K562 (cell line): ENCODE measurements at regions of chr4 and their contacts with region 1.

Region 1: DNA sequence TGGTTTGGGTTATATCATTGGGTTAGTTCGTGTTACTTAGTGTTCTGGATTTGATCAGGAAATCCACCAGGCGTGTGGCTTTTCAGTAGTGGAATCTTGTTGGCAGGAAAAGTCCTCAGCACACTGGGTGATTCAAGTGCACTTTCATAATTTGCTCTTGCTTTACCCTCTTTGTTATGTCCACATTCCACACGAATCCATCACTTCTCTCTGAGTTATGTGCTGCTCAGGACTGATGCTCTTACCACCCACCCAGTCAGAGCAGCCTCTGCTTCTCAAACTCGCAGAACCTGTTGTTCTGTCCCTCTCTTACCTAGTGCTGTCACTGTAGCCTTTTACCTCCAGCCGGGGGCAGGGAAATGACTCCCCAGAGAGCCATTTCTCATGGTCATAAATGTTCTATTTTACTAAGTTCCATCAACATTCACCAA is 37.2 kb upstream of the SCRG1 start:
- DNase-seq: no peak
- ATAC-seq: no peak; the same call in 2 of the 3 replicates
- H3K4me3 ChIP-seq: no peak overlapping the region
- H3K27ac ChIP-seq: no peak overlapping the region
- H3K4me1 ChIP-seq: peaks cover 0 to 2% of the 10 kb centered on the region in 2 experiments; a peak in 1 of 5 replicates
- H3K27me3 ChIP-seq: no peaks in the 10 kb centered on the region
- CTCF ChIP-seq: no peak
- EP300 ChIP-seq: no peak
- POLR2A ChIP-seq: no peak
- RAD21 ChIP-seq: no peak

Region 2: GRCh38 chr4:173752610-173753230 is 316.6 kb after region 1 on chr4:
- CTCF ChIA-PET with region 1: no interaction called
- POLR2A ChIA-PET with region 1: no interaction called
- in situ Hi-C with region 1: no loop called
- intact Hi-C with region 1: loop called (anchors 10 kb)
- DNase-seq: peak; percentile 40 to 74 (median 57)
- ATAC-seq: peak; percentile 84
- H3K4me3 ChIP-seq: no peak overlapping the region
- H3K27ac ChIP-seq: no peak overlapping the region
- H3K4me1 ChIP-seq: no peaks in the 10 kb centered on the region
- H3K27me3 ChIP-seq: no peaks in the 10 kb centered on the region
- CTCF ChIP-seq: peak; percentile 66 to 78 (median 72)
- EP300 ChIP-seq: no peak
- POLR2A ChIP-seq: no peak
- RAD21 ChIP-seq: peak in 1 of 2 experiments; percentile 44; a peak in 2 of 4 replicates